Caco-2 (cell line): ENCODE measurements at regions of chr11 and their contacts with region 1.

Region 1: GRCh38 chr11:74321487-74322188 is 10.2 kb upstream of the P4HA3 start:
- DNase-seq: peak in 1 of 2 experiments; percentile 49
- H3K4me3 ChIP-seq: no peak overlapping the region
- H3K4me3 Mint-ChIP-seq: no peak overlapping the region
- H3K27ac Mint-ChIP-seq: no peak overlapping the region
- H3K4me1 ChIP-seq: no peaks in the 10 kb centered on the region
- H3K4me1 Mint-ChIP-seq: no peaks in the 10 kb centered on the region
- H3K27me3 ChIP-seq: no peaks in the 10 kb centered on the region
- H3K27me3 Mint-ChIP-seq: no peaks in the 10 kb centered on the region
- CTCF ChIP-seq: peak; percentile 77 to 80

Region 2: DNA sequence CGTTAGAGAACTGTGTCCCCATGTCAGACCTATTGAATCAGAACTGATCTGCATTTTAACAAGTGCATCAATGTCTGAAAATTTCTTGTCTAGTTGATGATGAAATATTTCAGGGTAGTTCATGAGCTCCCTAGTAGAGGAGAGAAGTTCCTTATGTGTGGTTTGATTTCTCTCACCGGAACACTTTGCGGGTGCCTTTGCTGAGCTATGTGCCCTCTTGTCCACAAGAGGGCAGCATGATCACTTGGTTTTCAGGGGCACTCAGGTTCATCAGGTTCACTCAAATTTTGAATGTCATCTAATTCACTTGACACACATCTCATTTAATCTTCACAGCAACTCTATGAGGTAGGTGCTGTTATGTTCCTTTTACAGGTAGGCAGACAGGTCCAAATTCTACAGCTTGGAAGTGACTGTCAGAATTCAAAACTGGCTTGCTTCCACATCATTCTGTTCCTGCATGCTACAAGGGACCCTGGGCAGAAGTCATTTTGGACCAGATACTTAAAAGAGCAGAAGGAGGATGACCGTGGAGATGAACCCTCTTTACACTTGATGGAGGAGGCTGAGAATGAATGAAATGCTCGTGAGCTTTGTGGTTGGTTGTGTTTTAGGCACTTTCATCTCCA is 65.8 kb before region 1 on chr11:
- CTCF ChIA-PET with region 1: interaction called, 7 read pairs
- POLR2A ChIA-PET with region 1: no interaction called
- intact Hi-C with region 1: loop called (anchors 1 kb)
- DNase-seq: peak in 1 of 2 experiments; percentile 65
- H3K4me3 ChIP-seq: no peak overlapping the region
- H3K4me3 Mint-ChIP-seq: no peak overlapping the region
- H3K27ac Mint-ChIP-seq: no peak overlapping the region
- H3K4me1 ChIP-seq: no peaks in the 10 kb centered on the region
- H3K4me1 Mint-ChIP-seq: no peaks in the 10 kb centered on the region
- H3K27me3 ChIP-seq: no peaks in the 10 kb centered on the region
- H3K27me3 Mint-ChIP-seq: no peaks in the 10 kb centered on the region
- CTCF ChIP-seq: peak; percentile 91 to 94